ENCODE measurements at regions of chr5 and their contacts with region 1.

Region 1: DNA sequence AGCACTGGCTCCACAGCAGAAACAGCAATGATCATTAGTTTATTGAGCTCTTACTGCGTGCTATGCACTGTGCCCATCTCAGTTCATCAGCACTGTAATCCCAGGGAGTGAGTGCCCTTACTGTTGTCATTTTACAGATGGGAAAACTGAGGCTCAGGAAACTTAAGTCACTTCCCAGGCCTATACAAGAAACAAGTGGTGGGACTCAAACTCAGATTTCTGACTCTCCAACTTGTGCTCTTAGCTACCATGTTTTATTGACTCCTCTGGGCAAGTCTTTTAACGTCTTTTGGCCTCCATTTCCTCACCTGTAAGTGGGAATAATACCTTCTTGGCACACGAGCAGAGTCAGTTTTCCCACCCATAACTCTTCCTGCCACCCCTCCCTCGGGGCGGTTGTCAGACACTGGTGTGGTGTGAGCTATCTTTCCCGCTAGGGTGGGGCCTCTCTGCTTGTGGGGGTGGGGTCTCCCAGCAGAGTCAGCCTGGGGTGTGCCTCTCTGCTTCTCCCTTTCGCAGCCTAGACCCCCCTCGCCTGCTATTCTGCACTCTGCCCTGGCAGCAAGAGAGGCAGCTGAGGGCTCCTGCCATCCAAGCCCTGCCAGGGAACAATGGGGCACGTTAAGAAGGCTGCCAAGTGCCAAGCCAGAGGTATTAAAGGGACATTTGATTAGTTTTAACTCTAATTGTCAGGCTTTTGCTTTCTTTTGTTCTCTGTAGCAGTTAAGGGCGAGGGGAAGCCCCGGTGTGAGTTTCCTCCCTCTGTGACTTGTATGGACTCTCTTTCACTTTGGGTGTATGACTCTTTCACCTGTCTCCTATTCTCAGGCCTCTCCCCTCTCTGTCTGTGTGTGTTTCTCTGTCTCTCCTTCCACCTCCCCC is 12.1 kb downstream of the GALNT10 start:
- DNase-seq: peak; percentile 75
- CTCF ChIP-seq: no peak

Region 2: DNA sequence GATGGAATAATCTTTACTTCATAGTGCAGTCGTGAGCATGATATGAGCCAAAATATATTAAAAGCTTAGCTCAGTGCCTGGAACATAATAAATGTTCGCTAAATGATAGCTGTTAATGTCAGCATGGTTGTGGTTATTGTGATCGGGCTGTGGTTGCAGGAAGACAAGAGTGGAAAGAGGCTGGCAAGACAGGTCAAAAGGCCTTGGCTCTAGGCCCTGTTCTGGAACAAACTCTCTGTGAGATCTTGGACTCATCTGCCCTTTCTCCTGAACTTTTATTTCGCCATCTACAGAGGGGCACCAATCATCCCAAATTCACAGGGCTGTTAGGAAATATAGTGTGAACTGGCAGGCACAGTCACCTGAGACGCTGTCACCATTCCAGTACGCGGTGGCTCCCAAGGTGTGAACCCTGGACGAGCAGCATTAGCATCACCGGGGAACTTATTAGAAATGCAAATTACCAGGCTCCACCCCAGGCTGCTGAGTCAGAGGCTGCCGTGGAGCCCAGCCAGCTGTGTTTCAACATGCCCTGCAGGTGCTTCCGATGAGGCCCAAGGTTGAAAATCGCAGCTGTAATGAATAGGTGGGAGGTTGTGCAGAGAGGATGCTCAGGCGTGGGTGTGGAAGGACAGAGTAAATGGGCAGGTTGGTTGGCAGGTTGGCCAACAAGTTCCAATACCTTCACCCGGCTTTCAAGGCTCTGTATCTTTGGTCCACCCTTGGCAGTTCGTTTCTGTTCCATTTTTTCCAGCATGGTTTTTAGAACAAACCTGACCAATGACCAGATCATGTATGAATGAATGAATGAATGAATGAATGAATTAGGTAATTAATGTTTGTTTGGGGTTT is 193.0 kb after region 1 on chr5:
- in situ Hi-C with region 1: loop called (anchors 10 kb)
- DNase-seq: no peak
- CTCF ChIP-seq: no peak

Region 3: DNA sequence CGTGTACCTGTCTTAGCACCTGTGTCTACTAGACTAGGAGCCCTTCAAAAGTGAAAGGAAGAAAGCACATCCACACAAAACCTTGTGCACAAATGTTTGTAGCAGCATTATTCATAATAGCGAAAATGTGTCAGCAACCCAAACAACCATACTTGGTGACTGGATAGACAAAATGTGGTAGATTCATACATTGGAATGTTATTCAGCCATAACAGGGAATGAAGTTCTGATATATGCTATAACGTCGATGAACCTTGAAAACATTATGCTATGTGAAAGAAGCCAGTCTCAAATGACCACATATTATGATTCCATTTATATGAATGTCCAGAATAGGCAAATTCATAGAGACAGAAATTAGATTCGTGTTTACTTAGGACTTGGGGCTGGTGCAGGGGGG is 494.8 kb after region 1 on chr5:
- in situ Hi-C with region 1: no loop called
- DNase-seq: no peak
- CTCF ChIP-seq: no peak